Psoas muscle (tissue), 8 donors: ENCODE measurements at regions of chr18 and their contacts with region 1.

Region 1: DNA sequence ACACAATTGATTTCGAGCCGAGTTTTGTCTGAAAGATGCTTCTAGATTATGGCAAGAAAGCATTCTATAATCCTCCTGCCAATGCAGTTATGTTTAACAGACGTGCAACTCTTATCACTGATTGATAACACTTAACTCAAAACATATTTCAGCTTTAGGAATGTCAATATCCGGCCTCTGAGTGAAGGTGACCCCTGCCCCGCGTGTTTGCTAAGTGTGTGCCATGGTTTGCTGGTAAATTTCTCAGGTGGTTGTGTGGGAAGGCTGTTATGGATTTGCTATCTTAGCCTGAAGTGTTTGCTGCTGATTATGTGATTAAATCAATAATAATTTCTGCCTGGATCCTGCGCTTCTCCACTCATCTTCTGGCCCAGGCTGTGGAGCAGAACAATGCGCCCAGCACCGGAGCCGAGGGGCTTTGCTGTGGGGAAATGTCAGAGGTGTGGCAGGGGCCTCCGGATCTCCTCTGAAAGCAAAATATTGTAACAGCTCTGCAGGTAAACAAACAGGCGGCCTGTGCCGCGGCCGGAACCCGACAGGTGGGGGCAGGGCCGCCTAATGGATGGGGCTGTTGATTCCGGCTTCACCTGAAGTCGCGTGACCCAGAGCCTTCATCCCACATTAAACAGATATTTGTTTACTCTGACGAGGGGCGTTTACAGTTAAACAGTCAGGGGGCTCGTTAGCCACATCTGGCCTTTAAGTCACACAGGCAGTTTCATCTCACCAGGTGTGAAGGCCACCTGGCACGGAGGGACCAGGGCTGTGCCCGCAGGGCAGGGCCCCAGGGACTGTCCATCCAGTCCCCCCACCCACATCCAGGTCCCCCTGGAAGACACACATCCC is 210.7 kb upstream of the SALL3 start:
- DNase-seq: no peak
- ATAC-seq: no peak
- H3K4me3 ChIP-seq: no peak overlapping the region
- H3K27ac ChIP-seq: no peak overlapping the region
- H3K4me1 ChIP-seq: no peaks in the 10 kb centered on the region
- H3K27me3 ChIP-seq: peaks cover 0 to 7% (median 7%) of the 10 kb centered on the region in 3 donors
- CTCF ChIP-seq: no peak

Region 2: DNA sequence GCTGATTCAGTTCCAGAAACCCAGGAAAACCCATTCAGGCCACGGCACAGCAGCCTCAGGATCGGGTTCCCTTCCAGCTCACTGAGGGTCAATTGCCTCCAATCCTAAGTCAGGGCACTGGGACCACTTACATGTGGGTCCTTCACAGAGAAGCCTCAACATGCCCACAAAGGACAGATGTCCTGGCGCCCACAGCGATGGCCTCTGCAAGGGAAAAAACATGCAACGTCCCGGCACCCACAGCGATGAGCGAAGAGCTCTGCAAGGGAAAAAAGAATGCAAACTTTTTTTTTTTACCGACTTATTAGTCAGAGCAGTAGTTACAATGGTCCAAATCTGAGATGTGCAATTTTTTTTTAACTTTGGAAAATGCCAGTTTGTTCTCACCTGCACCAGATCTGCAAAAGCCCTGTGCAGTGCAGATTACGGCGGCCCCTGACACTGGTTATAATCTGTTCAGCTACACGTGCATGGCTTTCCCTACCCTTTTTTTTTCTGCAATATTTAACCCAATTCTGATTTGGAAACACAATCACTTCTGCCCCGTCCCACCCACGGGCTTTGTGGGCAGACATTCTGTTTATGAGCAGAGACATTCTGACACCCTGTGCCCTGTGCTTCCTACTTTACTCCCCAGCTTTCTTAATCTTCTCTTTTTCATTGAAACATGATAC is 51.4 kb after region 1 on chr18:
- intact Hi-C with region 1: loop called in 1 of 2 experiments (anchors 10 kb)
- DNase-seq: no peak
- ATAC-seq: no peak
- H3K4me3 ChIP-seq: no peak overlapping the region
- H3K27ac ChIP-seq: no peak overlapping the region
- H3K4me1 ChIP-seq: no peaks in the 10 kb centered on the region
- H3K27me3 ChIP-seq: peaks cover 0 to 38% (median 3%) of the 10 kb centered on the region in 3 donors
- CTCF ChIP-seq: no peak